ENCODE measurements at regions of chr9 and their contacts with region 1.

Region 1: DNA sequence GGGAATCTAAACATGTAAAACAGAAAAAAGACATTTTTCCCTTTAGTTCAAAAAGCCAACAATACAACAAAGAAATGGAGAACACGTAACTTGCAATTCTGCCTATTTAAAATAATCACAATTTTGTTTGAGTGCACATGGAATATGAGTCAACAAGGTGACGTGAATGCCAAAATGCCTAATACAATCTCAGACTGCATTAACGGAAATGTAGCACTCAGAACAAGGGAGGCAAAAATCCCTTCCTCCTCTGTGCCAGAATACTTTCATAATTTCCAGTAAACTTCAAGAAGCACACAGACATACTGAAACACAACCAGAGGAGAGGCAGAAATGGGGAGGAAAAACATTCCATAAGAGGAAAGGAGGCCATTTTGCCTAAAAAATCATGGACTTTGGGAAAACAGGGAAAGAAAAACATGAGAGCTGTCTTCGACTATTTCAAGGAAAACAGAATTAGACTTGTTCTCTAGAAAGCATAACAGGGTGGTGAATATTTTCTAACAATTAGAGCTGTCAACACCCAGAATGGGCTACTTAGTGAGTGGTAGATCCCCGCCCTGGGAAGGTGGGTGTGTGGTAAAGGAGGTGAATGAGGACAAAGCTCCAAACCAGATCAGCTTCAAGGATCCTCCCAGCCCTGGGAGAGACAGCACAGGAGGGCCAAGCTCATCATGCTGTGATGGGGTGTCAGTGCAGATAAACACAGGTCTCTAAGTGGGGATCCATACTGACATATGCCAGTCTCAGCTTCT is 48.2 kb downstream of the ABCA1 start:
- DNase-seq: no peak
- ATAC-seq: no peak
- H3K4me3 ChIP-seq: no peak overlapping the region
- H3K4me3 Mint-ChIP-seq: no peak overlapping the region
- H3K27ac ChIP-seq: no peak overlapping the region
- H3K27ac Mint-ChIP-seq: no peak overlapping the region
- H3K4me1 ChIP-seq: no peaks in the 10 kb centered on the region
- H3K4me1 Mint-ChIP-seq: no peaks in the 10 kb centered on the region
- H3K27me3 ChIP-seq: no peaks in the 10 kb centered on the region
- H3K27me3 Mint-ChIP-seq: no peaks in the 10 kb centered on the region
- CTCF ChIP-seq: no peak

Region 2: DNA sequence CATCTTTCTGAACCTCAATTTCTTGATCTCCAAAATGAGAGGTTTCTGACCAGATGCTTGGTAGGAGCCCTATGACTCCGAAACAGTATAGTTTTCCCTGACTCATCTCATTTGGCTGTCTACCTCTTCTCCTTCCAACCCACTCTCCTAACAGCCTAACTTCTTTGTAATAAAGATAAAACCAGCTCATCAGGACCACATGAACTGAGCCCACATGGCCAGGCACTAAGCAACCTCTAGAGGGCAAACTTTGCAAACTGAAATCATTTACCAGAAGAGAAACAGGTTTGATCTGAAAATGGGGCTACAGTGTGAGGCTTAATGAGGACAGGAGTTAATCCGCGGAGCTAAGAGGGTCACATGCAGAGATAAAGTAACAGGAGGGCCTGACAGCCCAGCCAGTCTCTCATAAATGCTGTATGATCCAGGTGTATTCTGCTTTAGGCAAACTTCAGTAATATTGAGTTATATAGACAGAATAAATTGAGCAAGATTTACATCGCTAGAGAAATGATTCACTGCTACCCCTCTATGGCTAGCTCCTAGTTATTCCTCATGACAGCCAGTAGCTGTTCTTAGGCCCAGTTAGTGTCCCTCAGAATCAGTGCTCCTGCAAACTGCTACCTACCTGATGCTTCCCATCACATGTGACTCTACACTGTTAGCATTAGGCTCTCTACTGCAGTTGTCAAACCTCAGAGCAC is 16.4 kb before region 1 on chr9:
- CTCF ChIA-PET with region 1: no interaction called
- POLR2A ChIA-PET with region 1: no interaction called
- intact Hi-C with region 1: no loop called
- DNase-seq: peak; percentile 9 to 78 (median 32)
- ATAC-seq: peak; percentile 92
- H3K4me3 ChIP-seq: no peak overlapping the region
- H3K4me3 Mint-ChIP-seq: no peak overlapping the region
- H3K27ac ChIP-seq: no peak overlapping the region
- H3K27ac Mint-ChIP-seq: no peak overlapping the region
- H3K4me1 ChIP-seq: no peaks in the 10 kb centered on the region
- H3K4me1 Mint-ChIP-seq: peaks cover 12% of the 10 kb centered on the region
- H3K27me3 ChIP-seq: no peaks in the 10 kb centered on the region
- H3K27me3 Mint-ChIP-seq: no peaks in the 10 kb centered on the region
- CTCF ChIP-seq: peak; percentile 77

Region 3: DNA sequence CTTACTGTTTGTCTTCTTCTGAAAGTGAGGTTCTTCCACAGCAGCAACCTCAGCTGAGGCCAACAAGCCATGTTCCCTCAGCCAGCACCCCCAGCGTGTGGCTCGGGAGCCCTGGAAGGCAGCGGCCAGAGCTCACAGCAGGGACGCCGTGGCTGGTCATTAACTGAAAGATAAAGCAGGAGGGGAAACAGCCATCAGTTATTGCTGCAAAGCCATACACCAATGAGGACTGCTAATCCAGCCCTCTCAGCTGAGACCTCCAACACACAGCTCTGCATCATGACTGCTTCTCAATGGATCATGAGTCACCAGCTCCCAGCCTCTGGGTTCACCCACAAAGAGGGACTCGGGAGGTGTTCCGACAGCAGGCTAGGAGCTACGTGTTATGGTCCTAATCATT is 23.9 kb after region 1 on chr9:
- CTCF ChIA-PET with region 1: no interaction called
- POLR2A ChIA-PET with region 1: no interaction called
- intact Hi-C with region 1: loop called in 1 of 2 experiments (anchors 1 kb)
- DNase-seq: no peak
- ATAC-seq: no peak
- H3K4me3 ChIP-seq: no peak overlapping the region
- H3K4me3 Mint-ChIP-seq: no peak overlapping the region
- H3K27ac ChIP-seq: no peak overlapping the region
- H3K27ac Mint-ChIP-seq: no peak overlapping the region
- H3K4me1 ChIP-seq: peaks cover 6% of the 10 kb centered on the region
- H3K4me1 Mint-ChIP-seq: peaks cover 21% of the 10 kb centered on the region
- H3K27me3 ChIP-seq: no peaks in the 10 kb centered on the region
- H3K27me3 Mint-ChIP-seq: no peaks in the 10 kb centered on the region
- CTCF ChIP-seq: no peak

Measured in CD4-positive, alpha-beta T cell (primary cell).